ENCODE measurements at regions of chr1 and their contacts with region 1.

Region 1: GRCh38 chr1:44835738-44836675 is 7.0 kb downstream of the PTCH2 start:
- DNase-seq: peak; percentile 95
- H3K4me3 ChIP-seq: peak overlapping the region in 1 of 8 donors; percentile 14
- H3K27ac ChIP-seq: peak overlapping the region in 1 of 8 donors; percentile 37
- H3K4me1 ChIP-seq: peaks cover 0 to 62% (median 26%) of the 10 kb centered on the region in 6 donors
- H3K27me3 ChIP-seq: no peaks in the 10 kb centered on the region
- CTCF ChIP-seq: peak; percentile 76 to 94 (median 85)
- POLR2A ChIP-seq: no peak

Region 2: GRCh38 chr1:44985747-44986359 is 149.8 kb after region 1 on chr1:
- intact Hi-C with region 1: loop called (anchors 5 kb)
- DNase-seq: no peak
- H3K4me3 ChIP-seq: peak overlapping the region; percentile 58 to 96 (median 80)
- H3K27ac ChIP-seq: peak overlapping the region in 6 of 8 donors; percentile 62 to 87 (median 78)
- H3K4me1 ChIP-seq: peaks cover 9 to 37% (median 16%) of the 10 kb centered on the region in 6 donors
- H3K27me3 ChIP-seq: no peaks in the 10 kb centered on the region
- CTCF ChIP-seq: no peak
- POLR2A ChIP-seq: no peak

Region 3: DNA sequence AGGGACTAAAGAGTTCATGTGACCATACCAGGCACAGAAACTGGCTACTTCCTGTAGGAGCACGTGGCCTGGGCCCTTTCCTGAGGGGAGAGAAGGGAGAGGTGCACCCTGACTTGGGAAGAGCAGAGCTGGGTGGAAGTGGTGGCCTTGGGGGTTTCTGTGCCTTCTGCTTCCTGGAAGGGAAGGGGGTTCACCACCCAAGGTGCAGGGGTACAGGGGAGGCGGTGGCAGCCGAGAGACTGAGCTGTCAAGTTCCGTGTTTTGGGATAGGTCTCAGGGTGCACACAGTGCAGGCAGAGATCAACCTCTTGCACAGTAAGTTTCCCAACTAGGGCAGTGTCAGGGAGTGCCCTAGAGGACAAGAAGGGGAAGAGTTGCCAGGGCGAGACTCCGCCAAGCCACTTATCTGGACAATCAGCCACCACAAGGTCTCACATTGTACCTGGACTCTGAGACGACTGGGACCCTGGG is 165.0 kb after region 1 on chr1:
- intact Hi-C with region 1: no loop called
- DNase-seq: peak; percentile 66
- H3K4me3 ChIP-seq: no peak overlapping the region
- H3K27ac ChIP-seq: peak overlapping the region in 7 of 8 donors; percentile 10 to 67 (median 42)
- H3K4me1 ChIP-seq: peaks cover 0 to 14% (median 8%) of the 10 kb centered on the region in 6 donors
- H3K27me3 ChIP-seq: no peaks in the 10 kb centered on the region
- CTCF ChIP-seq: no peak
- POLR2A ChIP-seq: no peak